Activated CD4-positive, alpha-beta T cell treated with anti-CD3 and anti-CD28 coated beads, Interleukin-2, amount 10 ng/mL, durations not matched to agents 24 days and 14 days (primary cell): ENCODE measurements at regions of chr7 and their contacts with region 1.

Region 1: GRCh38 chr7:130069978-130070860 is at the start of gene KLHDC10:
- DNase-seq: peak; percentile 98
- H3K4me3 Mint-ChIP-seq: peak within 1 kb of the TSS; percentile 95
- H3K27ac Mint-ChIP-seq: peak within 1 kb of the TSS; percentile 81
- H3K4me1 Mint-ChIP-seq: peaks cover 27% of the 10 kb centered on the region
- H3K27me3 Mint-ChIP-seq: no peaks in the 10 kb centered on the region
- total RNA-seq, gene KLHDC10: 14.4 and 16.8 TPM in 2 replicates

Region 2: DNA sequence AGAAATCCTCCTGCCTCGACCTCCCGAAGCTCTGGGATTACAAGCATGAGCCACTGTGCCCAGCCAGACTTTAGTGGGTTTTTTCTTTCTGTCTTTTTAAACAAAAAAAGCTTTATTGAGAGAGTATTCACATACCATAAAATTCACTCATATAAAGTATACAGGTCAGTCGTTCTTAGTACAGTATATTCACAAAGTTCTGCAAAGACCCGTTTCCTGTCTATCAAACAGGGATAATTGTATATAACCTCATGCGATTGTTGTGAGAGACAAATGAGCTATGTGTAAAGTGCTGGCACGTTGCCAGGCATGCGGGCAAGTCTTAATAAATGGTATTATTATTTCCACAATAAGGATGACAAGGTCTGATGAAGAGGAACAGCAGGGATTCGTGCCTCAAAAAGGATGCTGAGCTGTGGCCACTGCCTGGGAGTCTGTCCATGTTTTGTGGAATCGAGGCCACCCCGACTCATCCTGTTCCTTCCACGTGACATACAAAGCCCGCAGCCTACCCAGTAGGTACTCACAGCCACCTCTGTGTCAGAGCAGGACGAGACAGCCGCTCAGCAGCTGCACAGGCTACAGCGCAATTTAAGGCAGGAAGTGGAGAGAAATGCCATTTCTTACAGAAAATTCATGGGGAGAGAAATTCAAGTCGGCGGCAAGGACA is 516.2 kb before region 1 on chr7:
- intact Hi-C with region 1: no loop called
- DNase-seq: peak; percentile 72
- H3K4me3 Mint-ChIP-seq: peak overlapping the region; percentile 21
- H3K27ac Mint-ChIP-seq: no peak overlapping the region
- H3K4me1 Mint-ChIP-seq: peaks cover 4% of the 10 kb centered on the region
- H3K27me3 Mint-ChIP-seq: peaks cover 12% of the 10 kb centered on the region

Region 3: GRCh38 chr7:130135208-130136205 is 65.3 kb after region 1 on chr7:
- intact Hi-C with region 1: loop called (anchors 5 kb)
- DNase-seq: no peak
- H3K4me3 Mint-ChIP-seq: peak overlapping the region; percentile 32
- H3K27ac Mint-ChIP-seq: no peak overlapping the region
- H3K4me1 Mint-ChIP-seq: peaks cover 15% of the 10 kb centered on the region
- H3K27me3 Mint-ChIP-seq: no peaks in the 10 kb centered on the region

Region 4: GRCh38 chr7:130205084-130205947 is 135.1 kb after region 1 on chr7 and contains the start of gene TMEM209:
- intact Hi-C with region 1: loop called (anchors 1 kb)
- DNase-seq: peak; percentile 98
- H3K4me3 Mint-ChIP-seq: peak within 1 kb of the TSS; percentile 93
- H3K27ac Mint-ChIP-seq: peak within 1 kb of the TSS; percentile 98
- H3K4me1 Mint-ChIP-seq: peaks cover 25% of the 10 kb centered on the region
- H3K27me3 Mint-ChIP-seq: no peaks in the 10 kb centered on the region
- total RNA-seq, gene TMEM209: 48.2 and 52.9 TPM in 2 replicates

Region 5: GRCh38 chr7:130365511-130366441 is 295.6 kb after region 1 on chr7:
- intact Hi-C with region 1: loop called (anchors 10 kb)
- DNase-seq: no peak
- H3K4me3 Mint-ChIP-seq: peak overlapping the region; percentile 45
- H3K27ac Mint-ChIP-seq: peak overlapping the region; percentile 76
- H3K4me1 Mint-ChIP-seq: peaks cover 30% of the 10 kb centered on the region
- H3K27me3 Mint-ChIP-seq: no peaks in the 10 kb centered on the region

Region 6: DNA sequence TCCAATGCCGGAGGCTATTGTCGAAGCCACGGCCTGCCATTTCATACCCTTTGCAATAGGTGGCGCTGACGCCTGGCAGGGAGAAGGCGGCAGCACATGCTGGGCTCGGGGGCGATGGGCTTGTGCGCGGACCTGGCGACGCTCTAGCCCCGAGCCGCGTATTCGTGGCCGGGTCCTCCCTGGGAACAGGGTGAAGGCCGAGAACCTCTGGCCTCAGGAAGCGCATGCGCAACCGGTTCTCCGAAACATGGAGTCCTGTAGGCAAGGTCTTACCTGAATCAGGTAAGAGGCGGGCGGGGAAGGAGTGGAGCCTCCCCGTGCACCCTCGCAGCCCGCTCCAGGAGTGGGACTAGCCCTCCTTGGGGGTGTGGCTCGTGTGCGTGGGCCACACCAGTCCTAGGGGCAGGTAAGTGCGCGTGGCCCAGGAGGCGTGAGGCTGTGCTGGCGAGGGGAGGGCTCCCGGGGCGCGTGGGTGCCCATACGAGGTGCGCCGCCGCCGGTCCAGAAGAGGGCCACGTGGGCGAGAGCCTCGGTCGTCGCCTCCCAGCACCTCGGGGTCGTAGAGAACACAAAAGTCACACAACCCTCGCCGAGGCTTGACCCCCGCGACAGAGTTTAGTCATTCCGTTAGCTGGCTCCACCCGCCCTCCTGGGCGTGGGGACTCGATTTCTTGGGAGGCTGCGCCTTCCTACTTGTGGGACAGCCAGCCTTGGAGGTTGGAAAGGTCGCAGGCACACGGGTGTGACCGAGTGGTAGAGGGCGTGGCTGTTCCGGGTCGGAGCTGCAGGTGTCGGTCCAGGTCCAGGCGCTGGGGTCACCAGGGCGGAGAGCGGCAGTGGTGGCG is 416.1 kb after region 1 on chr7:
- intact Hi-C with region 1: loop called (anchors 1 kb)
- DNase-seq: peak; percentile 83
- H3K4me3 Mint-ChIP-seq: peak overlapping the region; percentile 81
- H3K27ac Mint-ChIP-seq: peak overlapping the region; percentile 65
- H3K4me1 Mint-ChIP-seq: peaks cover 22% of the 10 kb centered on the region
- H3K27me3 Mint-ChIP-seq: peaks cover 67% of the 10 kb centered on the region

Region 7: GRCh38 chr7:130649004-130649790 is 579.0 kb after region 1 on chr7:
- intact Hi-C with region 1: loop called (anchors 5 kb)
- DNase-seq: peak; percentile 67
- H3K4me3 Mint-ChIP-seq: peak overlapping the region; percentile 50
- H3K27ac Mint-ChIP-seq: peak overlapping the region; percentile 86
- H3K4me1 Mint-ChIP-seq: peaks cover 35% of the 10 kb centered on the region
- H3K27me3 Mint-ChIP-seq: no peaks in the 10 kb centered on the region

Region 8: DNA sequence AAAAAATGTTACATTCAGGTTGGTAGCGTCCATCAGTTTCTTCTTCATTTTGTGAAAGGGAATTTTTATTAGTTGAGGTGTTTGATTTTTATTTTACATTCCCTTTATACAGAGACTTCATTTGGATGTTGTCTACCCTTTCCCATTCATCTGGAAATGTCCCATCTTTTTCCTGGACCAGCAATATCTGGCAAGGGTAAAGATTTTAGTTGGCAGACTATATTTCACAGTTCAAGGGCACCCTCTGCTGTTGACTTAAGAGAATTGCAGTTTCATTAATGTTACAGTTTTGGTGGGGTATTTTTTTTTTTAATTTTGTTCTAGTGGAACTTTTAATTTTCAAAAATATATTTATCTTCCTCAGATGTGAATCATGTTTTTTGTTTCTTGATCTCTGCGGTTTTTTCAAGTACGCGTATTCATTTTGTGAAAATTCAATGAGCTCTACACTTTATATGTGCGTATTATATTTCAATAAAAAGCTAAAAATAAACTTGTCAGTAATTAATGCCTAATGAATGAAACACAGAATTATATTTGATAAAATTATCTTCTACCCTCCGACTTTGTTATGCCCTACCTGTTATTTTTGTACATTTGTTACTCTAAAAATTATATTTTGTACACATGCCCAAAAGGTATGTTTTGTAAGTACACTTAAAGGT is 761.7 kb after region 1 on chr7:
- intact Hi-C with region 1: loop called (anchors 2 kb)
- DNase-seq: peak; percentile 60
- H3K4me3 Mint-ChIP-seq: no peak overlapping the region
- H3K27ac Mint-ChIP-seq: no peak overlapping the region
- H3K4me1 Mint-ChIP-seq: no peaks in the 10 kb centered on the region
- H3K27me3 Mint-ChIP-seq: peaks cover 26% of the 10 kb centered on the region